Common myeloid progenitor, CD34-positive (primary cell): ENCODE measurements at regions of chr1 and their contacts with region 1.

Region 1: GRCh38 chr1:19661721-19662228 is 2.9 kb upstream of the HTR6 start:
- DNase-seq: peak; percentile 59 to 83 (median 70)
- H3K4me3 ChIP-seq: no peak overlapping the region
- H3K27ac ChIP-seq: no peak overlapping the region
- H3K4me1 ChIP-seq: peaks cover 0 to 14% (median 12%) of the 10 kb centered on the region in 4 experiments
- H3K27me3 ChIP-seq: peaks cover 0 to 53% (median 32%) of the 10 kb centered on the region in 5 experiments

Region 2: GRCh38 chr1:19374083-19374801 is 287.5 kb before region 1 on chr1:
- CTCF ChIA-PET with region 1: interaction called, 11 read pairs
- POLR2A ChIA-PET with region 1: no interaction called
- DNase-seq: no peak
- H3K4me3 ChIP-seq: no peak overlapping the region
- H3K27ac ChIP-seq: no peak overlapping the region
- H3K4me1 ChIP-seq: peaks cover 0 to 54% (median 25%) of the 10 kb centered on the region in 4 experiments
- H3K27me3 ChIP-seq: no peaks in the 10 kb centered on the region

Region 3: DNA sequence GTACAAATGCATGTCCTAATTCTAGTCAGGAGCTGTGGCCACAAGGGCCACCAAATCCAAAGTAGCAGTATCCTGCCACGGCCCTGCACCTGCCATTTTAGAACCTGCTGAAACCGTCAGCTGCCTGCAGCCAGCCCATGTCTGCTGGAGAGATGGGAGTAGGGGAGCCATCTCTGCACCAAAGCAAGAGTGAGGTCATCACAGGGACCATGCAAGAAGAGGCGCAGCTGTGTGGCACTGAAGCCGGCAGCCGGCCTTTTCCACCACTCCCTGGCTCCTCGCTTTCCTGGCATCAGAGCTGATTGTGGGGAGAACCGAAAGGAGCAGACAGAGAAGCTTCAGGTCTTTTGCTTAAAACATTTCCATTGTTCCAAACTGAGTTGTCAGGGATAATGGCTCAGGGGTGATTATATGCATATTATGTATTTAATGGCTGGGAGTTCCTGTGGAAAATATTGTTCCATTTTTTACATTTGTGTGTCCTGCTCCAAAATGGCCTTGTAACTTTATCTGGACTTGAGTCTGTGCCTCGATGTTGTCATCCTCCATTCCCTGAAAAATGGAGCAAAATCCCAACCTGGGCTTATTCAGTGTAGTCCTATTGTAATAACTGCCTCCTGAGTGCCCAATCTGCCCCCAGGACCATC is 36.4 kb before region 1 on chr1:
- CTCF ChIA-PET with region 1: no interaction called
- POLR2A ChIA-PET with region 1: no interaction called
- DNase-seq: no peak
- H3K4me3 ChIP-seq: no peak overlapping the region
- H3K27ac ChIP-seq: no peak overlapping the region
- H3K4me1 ChIP-seq: no peaks in the 10 kb centered on the region
- H3K27me3 ChIP-seq: no peaks in the 10 kb centered on the region

Region 4: DNA sequence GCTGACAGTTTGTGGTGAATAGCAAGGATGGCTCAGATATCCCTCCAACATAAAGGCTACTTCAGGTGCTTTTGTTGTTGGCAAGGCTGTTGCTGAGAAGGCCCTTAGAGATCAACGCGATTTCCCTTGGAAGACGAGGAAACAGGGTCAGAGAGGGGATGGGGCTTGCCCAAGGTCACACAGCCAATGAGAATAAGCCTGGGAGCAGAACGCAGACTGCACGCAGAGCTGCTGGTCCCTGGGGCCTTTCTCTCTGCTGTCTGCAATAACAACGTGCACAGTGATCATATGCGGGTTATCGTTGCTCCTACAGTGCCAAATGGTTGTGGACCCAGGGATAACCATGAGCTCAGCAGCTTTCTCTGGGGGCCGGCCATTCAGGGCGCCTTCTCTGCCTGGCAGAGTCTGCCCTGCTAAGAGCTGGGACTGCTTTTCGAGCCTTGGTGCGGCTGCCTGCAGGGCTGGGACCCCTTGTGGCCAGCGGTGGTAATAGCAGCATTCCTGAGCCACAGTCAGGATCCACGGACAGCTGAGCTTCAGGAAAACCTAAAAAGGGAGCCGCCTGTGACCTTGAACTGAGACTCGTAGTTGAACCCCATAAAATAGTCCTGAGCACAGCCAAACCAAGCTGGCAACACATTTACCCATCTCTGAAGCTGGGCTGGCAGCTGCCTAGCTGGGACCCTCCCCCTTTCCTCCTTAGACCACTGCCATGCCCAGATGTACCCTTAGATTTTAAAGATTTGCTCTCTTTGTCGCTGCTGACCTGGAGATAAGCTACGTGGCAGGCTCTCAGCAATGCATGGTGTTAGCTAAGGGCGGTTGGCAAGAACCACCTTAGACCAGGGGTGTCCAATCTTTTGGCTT is 42.7 kb after region 1 on chr1:
- CTCF ChIA-PET with region 1: interaction called, 62 read pairs
- POLR2A ChIA-PET with region 1: no interaction called
- DNase-seq: peak; percentile 36 to 54 (median 52)
- H3K4me3 ChIP-seq: no peak overlapping the region
- H3K27ac ChIP-seq: no peak overlapping the region
- H3K4me1 ChIP-seq: no peaks in the 10 kb centered on the region
- H3K27me3 ChIP-seq: no peaks in the 10 kb centered on the region